Sciatic nerve (tissue), 2 donors: ENCODE measurements at regions of chr15 and their contacts with region 1.

Region 1: GRCh38 chr15:66774001-66774814 is 72.2 kb downstream of the SMAD6 start:
- DNase-seq: peak; percentile 92
- ATAC-seq: peak; percentile 92

Region 2: GRCh38 chr15:66603301-66604179 is 170.7 kb before region 1 on chr15:
- intact Hi-C with region 1: loop called (anchors 5 kb)
- DNase-seq: peak; percentile 76
- ATAC-seq: peak; percentile 81

Region 3: DNA sequence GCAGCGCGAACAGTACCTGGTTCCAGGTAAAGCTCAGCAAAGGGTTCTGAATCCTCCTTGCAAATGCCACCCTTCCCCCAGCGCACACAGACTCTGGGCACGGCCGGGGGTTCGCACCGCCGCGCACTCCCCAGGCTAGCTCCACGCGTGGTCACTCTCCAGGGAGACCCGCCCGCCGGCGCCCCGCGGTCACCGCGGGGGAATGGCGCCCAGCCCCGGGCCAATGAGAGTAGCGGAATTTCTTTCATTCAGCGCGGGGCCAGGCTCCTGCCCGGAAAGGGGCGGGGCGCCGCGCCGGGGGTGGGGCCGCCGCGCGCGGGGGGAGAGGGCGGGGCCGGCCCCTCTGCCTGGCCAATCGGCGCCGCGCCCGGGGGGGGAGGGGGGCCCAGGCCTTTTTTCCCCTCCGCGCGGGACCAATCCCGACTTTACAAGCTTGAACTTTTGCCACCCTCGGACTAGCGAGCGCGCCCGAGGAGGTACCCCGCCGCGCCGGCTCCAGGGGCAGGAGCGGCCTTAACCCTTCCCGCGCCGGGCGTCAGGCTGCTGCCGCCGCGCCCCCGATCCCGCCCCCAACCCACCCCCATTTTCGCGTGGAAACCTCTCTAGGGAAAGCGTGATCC is 73.3 kb before region 1 on chr15:
- intact Hi-C with region 1: loop called (anchors 5 kb)
- DNase-seq: peak; percentile 97
- ATAC-seq: peak; percentile 88

Region 4: GRCh38 chr15:66720206-66721006 is 53.8 kb before region 1 on chr15:
- intact Hi-C with region 1: no loop called
- DNase-seq: no peak
- ATAC-seq: peak; percentile 64

Region 5: GRCh38 chr15:66901336-66902100 is 127.3 kb after region 1 on chr15:
- intact Hi-C with region 1: no loop called
- DNase-seq: no peak
- ATAC-seq: peak; percentile 34

Region 6: DNA sequence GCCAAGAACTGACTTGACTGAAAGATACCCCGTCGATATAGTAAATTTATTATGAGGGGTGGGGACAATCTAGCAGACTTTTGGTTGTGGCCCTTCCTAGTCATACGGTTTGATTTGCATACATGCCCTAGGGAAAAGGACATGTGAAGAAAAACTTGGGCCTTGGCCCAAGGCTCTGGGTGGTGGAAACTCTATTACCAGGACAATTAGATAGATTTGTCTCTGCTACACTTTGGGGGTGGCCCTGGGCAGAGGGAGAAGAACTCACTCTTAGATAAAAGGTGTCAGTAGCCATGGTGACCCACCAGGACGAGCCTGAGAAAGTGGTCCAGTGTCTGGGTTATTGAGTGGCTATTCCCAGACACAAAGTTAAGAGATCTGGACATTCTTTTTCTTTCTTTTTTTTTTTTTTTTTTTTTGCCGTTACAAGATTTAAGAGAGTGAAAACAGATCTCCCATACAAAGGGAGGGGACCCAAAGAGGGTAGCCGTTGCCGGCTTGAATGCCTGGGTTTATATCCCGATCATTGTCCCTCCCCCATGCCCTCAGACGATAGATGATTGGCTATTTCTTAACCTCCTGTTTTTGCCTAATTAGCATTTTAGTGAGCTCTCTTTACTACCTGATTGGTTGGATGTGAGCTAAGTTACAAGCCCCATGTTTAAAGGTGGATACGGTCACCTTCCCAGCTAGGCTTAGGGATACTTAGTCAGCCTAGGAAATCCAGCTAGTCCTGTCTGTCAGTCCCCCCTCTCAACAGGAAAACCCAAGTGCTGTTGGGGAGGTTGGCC is 194.8 kb after region 1 on chr15:
- intact Hi-C with region 1: no loop called
- DNase-seq: no peak
- ATAC-seq: no peak

Region 7: GRCh38 chr15:67892559-67893377 is 1118.6 kb after region 1 on chr15:
- intact Hi-C with region 1: no loop called
- DNase-seq: no peak
- ATAC-seq: peak; percentile 74